Caco-2 (cell line): ENCODE measurements at regions of chr20 and their contacts with region 1.

Region 1: DNA sequence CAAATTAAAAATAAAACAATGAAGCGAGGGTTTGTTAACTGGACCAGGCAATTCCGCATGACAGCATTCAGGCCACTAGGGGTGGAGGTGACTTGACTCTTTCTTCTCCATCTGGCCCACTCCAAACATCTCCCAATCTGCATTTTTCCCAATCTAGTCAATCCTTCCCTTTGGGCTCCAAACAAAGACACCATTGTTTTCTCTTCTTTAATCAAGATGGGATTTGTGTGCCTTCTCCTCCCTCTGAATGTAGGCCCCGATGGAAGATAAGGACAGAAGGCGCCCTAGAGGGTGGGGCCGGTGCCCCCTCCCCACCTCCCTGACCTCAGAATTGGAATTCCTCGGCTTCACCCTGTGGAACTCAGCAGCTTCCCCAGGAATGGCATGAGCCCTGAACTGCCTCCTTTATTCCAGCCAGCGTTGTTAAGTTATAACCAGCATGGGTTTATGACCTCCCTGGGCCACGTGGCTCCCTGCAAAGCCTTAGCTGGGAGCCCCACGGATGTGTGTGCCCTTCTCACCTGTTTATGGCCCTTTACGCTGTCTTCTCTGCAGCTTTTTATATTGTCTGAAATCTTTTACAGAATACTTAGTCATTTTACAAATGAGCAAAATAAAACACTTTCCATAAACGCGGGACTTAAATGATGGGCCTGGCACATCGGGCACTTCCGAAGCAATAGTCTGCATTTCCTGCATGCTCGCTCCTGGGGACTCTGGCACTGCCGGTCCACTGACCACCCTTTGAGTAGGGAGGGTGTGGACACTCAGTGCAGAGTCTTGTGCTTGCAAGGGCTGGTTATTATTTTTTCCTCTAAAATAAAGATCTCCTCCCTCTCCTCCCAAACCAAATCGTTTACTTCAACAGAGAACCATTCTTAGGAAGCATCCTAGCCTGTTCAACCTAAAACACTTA is 24.5 kb downstream of the OVOL2 start:
- DNase-seq: peak; percentile 85 to 96
- H3K4me3 ChIP-seq: no peak overlapping the region
- H3K4me3 Mint-ChIP-seq: peak overlapping the region; percentile 61
- H3K27ac Mint-ChIP-seq: peak overlapping the region; percentile 88
- H3K4me1 ChIP-seq: peaks cover 58% of the 10 kb centered on the region
- H3K4me1 Mint-ChIP-seq: peaks cover 38% of the 10 kb centered on the region
- H3K27me3 ChIP-seq: no peaks in the 10 kb centered on the region
- H3K27me3 Mint-ChIP-seq: no peaks in the 10 kb centered on the region
- CTCF ChIP-seq: peak; percentile 43 to 45

Region 2: DNA sequence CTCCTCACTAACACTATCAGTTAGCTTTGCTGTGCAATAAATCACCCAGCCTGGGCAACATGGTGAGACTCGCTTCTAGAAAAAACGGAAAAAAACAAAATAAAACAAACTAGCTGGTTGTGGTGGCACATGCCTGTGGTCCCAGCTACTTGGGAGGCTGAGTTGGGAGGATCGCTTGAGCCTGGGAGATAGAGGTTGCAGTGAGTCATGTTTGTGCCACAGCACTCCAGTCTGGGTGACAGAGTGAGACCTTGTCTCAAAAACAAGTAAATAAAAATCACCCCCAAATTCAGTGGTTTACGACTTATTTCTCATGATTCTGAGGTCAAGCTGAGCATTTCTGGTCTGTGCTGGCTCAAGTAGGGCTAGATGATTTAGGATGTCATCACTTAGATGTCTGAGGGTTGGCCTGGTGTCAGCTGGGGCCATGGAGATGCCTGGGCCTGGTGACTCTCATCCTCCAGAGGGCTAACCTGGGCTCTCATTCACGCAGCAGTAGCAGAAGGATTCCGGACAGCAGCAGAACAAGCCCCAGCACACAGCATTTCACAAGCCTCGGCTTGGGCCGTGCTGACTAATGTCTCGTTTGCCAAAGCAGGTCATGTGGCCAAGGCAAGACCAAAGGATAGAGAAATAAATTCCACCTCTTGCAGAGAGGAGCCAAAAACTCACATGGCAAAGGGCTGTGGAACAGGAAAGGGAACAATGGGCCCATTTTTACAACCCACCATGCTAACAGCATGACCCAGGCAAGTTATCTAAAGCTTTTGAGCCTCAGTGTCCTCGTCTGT is 31.9 kb before region 1 on chr20:
- CTCF ChIA-PET with region 1: no interaction called
- POLR2A ChIA-PET with region 1: no interaction called
- intact Hi-C with region 1: loop called (anchors 2 kb)
- DNase-seq: peak; percentile 70 to 77
- H3K4me3 ChIP-seq: no peak overlapping the region
- H3K4me3 Mint-ChIP-seq: no peak overlapping the region
- H3K27ac Mint-ChIP-seq: peak overlapping the region; percentile 76
- H3K4me1 ChIP-seq: peaks cover 40% of the 10 kb centered on the region
- H3K4me1 Mint-ChIP-seq: peaks cover 17% of the 10 kb centered on the region
- H3K27me3 ChIP-seq: no peaks in the 10 kb centered on the region
- H3K27me3 Mint-ChIP-seq: no peaks in the 10 kb centered on the region
- CTCF ChIP-seq: no peak

Region 3: GRCh38 chr20:18046535-18046934 is 13.3 kb after region 1 on chr20:
- CTCF ChIA-PET with region 1: interaction called, 3 read pairs
- POLR2A ChIA-PET with region 1: interaction called, 4 read pairs
- intact Hi-C with region 1: loop called (anchors 2 kb)
- DNase-seq: no peak
- H3K4me3 ChIP-seq: no peak overlapping the region
- H3K4me3 Mint-ChIP-seq: no peak overlapping the region
- H3K27ac Mint-ChIP-seq: no peak overlapping the region
- H3K4me1 ChIP-seq: no peaks in the 10 kb centered on the region
- H3K4me1 Mint-ChIP-seq: no peaks in the 10 kb centered on the region
- H3K27me3 ChIP-seq: no peaks in the 10 kb centered on the region
- H3K27me3 Mint-ChIP-seq: no peaks in the 10 kb centered on the region
- CTCF ChIP-seq: no peak

Region 4: DNA sequence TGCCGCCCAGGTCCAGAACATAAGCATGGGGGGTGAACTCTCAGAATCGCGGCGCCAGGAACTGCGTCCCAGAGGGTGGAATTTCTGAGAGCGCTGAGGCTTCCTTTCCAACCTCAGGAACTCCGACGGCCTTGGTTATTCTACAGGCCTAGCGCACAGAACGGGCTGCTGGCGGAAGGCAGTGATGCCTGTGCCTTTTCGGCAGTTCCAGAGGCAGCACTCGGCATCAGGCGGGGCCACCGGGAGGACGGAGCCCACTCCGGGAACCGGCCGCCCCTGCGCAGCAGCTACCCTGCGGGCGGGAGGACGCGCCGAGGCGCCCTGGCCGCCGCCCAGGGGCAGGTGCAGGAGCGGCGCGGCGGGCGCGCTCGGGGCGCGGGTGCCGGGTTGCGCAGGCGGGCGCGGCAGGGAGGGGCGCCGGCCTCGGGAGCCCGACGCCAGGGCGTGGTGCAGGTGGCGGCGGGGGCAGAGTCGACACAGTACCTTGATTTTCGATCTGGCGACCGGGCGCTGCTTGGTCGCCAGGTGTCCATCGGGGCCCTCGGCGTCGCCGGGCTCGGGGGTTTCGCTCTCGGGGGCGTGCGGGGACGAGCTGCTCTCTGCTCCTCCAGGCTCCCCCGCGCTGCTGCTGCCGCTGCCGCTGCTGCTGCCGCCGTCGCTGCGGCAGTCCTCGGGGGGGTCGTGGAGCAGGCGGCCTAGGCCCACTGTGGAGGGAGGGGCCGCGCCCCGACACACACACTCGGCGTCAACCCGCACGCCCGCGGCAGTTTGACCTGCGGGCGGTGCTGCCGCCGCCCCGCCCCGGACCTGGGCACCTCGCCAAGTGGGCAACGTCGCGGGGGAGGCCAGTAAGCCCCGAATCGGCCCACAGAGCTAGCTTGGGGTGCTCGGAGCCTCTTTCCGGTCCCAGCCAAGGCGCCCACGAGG is 23.2 kb after region 1 on chr20:
- CTCF ChIA-PET with region 1: no interaction called
- POLR2A ChIA-PET with region 1: no interaction called
- intact Hi-C with region 1: loop called (anchors 2 kb)
- DNase-seq: peak; percentile 49 to 63
- H3K4me3 ChIP-seq: peak overlapping the region; percentile 83
- H3K4me3 Mint-ChIP-seq: peak overlapping the region; percentile 85
- H3K27ac Mint-ChIP-seq: no peak overlapping the region
- H3K4me1 ChIP-seq: peaks cover 30% of the 10 kb centered on the region
- H3K4me1 Mint-ChIP-seq: peaks cover 29% of the 10 kb centered on the region
- H3K27me3 ChIP-seq: no peaks in the 10 kb centered on the region
- H3K27me3 Mint-ChIP-seq: no peaks in the 10 kb centered on the region
- CTCF ChIP-seq: no peak

Region 5: GRCh38 chr20:18176318-18176785 is 143.1 kb after region 1 on chr20:
- CTCF ChIA-PET with region 1: no interaction called
- POLR2A ChIA-PET with region 1: no interaction called
- intact Hi-C with region 1: no loop called
- DNase-seq: peak in 1 of 2 experiments; percentile 34
- H3K4me3 ChIP-seq: no peak overlapping the region
- H3K4me3 Mint-ChIP-seq: no peak overlapping the region
- H3K27ac Mint-ChIP-seq: peak overlapping the region; percentile 49
- H3K4me1 ChIP-seq: no peaks in the 10 kb centered on the region
- H3K4me1 Mint-ChIP-seq: peaks cover 7% of the 10 kb centered on the region
- H3K27me3 ChIP-seq: no peaks in the 10 kb centered on the region
- H3K27me3 Mint-ChIP-seq: no peaks in the 10 kb centered on the region
- CTCF ChIP-seq: no peak